ENCODE measurements at regions of chr18 and their contacts with region 1.

Region 1: DNA sequence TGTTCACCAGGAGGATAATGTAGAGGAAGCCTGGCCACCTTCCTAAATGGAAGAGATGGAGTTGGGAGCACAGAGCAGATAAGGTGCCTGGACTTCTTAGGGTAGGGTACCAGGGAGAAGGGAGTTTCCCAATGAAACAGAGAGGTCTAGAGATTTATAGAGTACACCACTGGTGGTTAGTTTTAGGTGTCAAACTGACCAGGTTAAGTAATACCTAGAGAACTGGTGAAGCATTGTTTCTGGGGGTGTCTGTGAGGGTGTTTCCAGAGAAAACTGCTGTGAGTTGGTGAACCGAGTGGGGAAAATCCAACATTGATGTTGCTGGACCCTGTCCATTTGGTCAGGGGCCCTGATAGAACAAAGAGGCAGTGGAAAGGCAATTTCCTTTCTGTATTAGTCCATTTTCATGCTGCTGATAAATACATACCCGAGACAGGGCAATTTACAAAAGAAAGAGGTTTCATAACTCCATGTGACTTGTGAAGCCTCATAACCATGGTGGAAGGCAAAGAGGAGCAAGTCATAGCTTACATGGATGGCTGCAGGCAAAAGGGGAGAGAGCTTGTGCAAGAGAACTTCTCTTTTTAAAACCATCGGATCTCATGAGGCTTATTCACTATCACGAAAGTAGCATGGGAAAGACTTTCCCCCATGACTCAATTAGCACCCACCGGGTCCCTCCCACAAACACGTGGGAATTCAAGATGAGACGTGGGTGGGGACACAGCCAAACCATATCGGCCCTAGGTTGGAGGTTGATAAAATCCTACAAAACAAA is 260.8 kb downstream of the CBLN2 start:
- DNase-seq: no peak
- H3K4me3 Mint-ChIP-seq: no peak overlapping the region
- H3K27ac Mint-ChIP-seq: no peak overlapping the region
- H3K4me1 Mint-ChIP-seq: no peaks in the 10 kb centered on the region
- H3K27me3 Mint-ChIP-seq: no peaks in the 10 kb centered on the region

Region 2: DNA sequence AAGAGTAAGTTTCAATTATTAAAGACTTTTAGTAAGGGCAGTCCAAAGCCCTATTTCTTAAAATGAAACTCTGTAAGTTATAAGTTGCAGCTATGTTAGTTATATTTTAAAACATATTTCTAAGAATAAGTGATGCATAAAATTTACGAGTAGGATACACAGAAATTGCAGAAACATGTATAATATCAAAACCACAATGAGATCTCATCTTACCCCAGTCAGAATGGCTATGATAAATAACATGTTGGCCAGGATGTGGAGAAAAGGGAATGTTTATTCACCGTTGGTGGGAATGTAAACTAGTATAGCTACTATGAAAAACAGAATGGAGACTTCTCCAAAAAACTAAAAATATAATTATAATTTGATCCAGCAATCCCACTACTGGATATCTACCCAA is 59.6 kb after region 1 on chr18:
- CTCF ChIA-PET with region 1: no interaction called
- intact Hi-C with region 1: loop called (anchors 10 kb)
- DNase-seq: no peak
- H3K4me3 Mint-ChIP-seq: no peak overlapping the region
- H3K27ac Mint-ChIP-seq: no peak overlapping the region
- H3K4me1 Mint-ChIP-seq: no peaks in the 10 kb centered on the region
- H3K27me3 Mint-ChIP-seq: no peaks in the 10 kb centered on the region

Measured in activated naive CD4-positive, alpha-beta T cell treated with anti-CD3 and anti-CD28 coated beads for 36 hours (primary cell).